ENCODE measurements at regions of chr2 and their contacts with region 1.

Region 1: GRCh38 chr2:111897924-111898702 is at the start of gene MERTK:
- DNase-seq: peak; percentile 44
- H3K4me3 Mint-ChIP-seq: peak within 1 kb of the TSS; percentile 74
- H3K27ac Mint-ChIP-seq: no peak within 1 kb of the TSS
- H3K4me1 Mint-ChIP-seq: peaks cover 19% of the 10 kb centered on the region
- H3K27me3 Mint-ChIP-seq: peaks cover 32% of the 10 kb centered on the region
- CTCF ChIP-seq: peak; percentile 43
- total RNA-seq, gene MERTK: 0.19 and 0.49 TPM in 2 replicates

Region 2: DNA sequence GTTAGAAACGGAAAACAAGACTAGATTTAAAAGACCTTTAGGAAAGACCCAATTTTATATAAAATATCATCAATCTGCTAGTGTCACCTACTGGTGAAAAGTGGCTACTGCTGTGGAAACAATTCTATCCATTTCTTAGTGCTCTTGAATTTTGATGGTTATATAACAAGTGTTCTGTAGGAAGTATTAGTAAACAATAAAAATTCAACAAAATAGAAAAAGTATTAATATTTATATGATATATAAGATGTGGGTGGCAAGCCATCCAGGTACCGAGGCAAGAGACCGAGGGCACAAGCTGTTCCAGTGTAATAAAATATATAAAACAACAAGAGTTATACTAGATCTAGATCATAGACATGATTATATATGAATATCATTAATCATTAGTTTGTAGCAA is 150.8 kb after region 1 on chr2:
- CTCF ChIA-PET with region 1: interaction called, 151 read pairs
- POLR2A ChIA-PET with region 1: interaction called, 3 read pairs
- intact Hi-C with region 1: loop called (anchors 1 kb)
- DNase-seq: peak; percentile 66
- H3K4me3 Mint-ChIP-seq: no peak overlapping the region
- H3K27ac Mint-ChIP-seq: no peak overlapping the region
- H3K4me1 Mint-ChIP-seq: peaks cover 6% of the 10 kb centered on the region
- H3K27me3 Mint-ChIP-seq: no peaks in the 10 kb centered on the region
- CTCF ChIP-seq: peak; percentile 60